Mammary epithelial cell (primary cell): ENCODE measurements at regions of chr6 and their contacts with region 1.

Region 1: GRCh38 chr6:157954150-157955117 is 27.2 kb upstream of the SYNJ2 start:
- DNase-seq: peak; percentile 56
- H3K4me3 ChIP-seq: peak overlapping the region; percentile 3 to 34 (median 13)
- H3K27ac ChIP-seq: no peak overlapping the region
- H3K4me1 ChIP-seq: peaks cover 13% of the 10 kb centered on the region
- H3K27me3 ChIP-seq: no peaks in the 10 kb centered on the region
- CTCF ChIP-seq: no peak

Region 2: DNA sequence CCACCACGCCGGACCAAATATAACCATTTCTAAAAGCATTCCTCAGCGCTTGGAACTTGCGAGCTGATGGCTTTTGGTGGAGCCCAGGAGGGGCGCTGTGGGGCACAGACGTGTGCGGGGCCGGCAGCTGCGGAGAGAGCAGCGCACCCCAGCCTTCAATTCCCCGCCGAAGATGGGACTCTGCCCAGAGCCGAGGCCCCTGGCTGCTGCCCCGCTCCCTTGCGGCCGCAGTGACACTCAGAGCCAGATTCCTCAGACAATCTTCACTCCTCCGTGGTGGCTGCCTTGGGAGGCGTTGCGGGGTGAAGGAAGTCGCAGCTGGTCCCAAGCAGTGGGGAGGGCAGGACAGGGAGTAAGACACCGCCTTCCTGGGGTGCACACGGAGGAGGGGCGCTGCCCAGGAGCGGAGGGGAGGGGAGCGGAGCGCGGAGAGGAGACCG is 718.8 kb before region 1 on chr6:
- CTCF ChIA-PET with region 1: no interaction called
- dilution Hi-C with region 1: no loop called
- in situ Hi-C with region 1: no loop called
- intact Hi-C with region 1: no loop called
- DNase-seq: peak; percentile 16
- H3K4me3 ChIP-seq: peak overlapping the region; percentile 8 to 46 (median 26)
- H3K27ac ChIP-seq: no peak overlapping the region
- H3K4me1 ChIP-seq: peaks cover 7% of the 10 kb centered on the region
- H3K27me3 ChIP-seq: peaks cover 15% of the 10 kb centered on the region
- CTCF ChIP-seq: peak; percentile 49 to 69

Region 3: DNA sequence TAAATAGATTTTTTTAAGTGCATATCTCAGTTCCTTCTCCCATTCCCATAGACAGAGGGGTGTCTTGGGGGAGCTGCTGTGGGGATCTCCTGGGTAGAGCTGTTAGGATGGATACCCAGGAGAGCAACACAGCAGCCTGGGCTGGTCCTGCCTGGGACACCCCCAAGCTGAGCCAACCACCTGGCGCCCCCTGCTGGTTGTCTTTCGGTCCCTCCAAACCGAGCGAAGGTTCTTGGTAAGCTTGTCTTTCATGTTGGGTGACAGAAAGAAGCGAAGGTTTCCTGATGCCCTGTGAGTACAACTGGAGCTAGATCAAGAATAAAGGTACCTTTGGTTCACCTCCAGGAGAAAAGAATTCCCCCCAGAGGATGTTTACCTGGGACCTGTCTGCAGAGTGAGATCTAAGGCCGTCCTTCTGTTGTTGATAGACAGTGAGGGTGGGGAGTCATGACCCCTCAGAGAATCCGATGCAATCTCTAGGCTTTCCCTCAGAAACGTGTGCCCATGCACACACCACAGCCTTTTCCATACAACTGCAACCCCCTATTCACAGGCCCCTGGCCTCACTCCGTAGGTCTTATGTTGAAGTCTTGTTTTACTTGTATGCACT is 80.6 kb before region 1 on chr6:
- CTCF ChIA-PET with region 1: no interaction called
- dilution Hi-C with region 1: loop called (anchors 5 kb)
- in situ Hi-C with region 1: no loop called
- intact Hi-C with region 1: no loop called
- DNase-seq: peak; percentile 56
- H3K4me3 ChIP-seq: no peak overlapping the region
- H3K27ac ChIP-seq: no peak overlapping the region
- H3K4me1 ChIP-seq: no peaks in the 10 kb centered on the region
- H3K27me3 ChIP-seq: no peaks in the 10 kb centered on the region
- CTCF ChIP-seq: peak; percentile 82 to 96

Region 4: GRCh38 chr6:157921685-157922367 is 32.6 kb before region 1 on chr6:
- CTCF ChIA-PET with region 1: no interaction called
- dilution Hi-C with region 1: no loop called
- in situ Hi-C with region 1: no loop called
- intact Hi-C with region 1: no loop called
- DNase-seq: no peak
- H3K4me3 ChIP-seq: no peak overlapping the region
- H3K27ac ChIP-seq: no peak overlapping the region
- H3K4me1 ChIP-seq: no peaks in the 10 kb centered on the region
- H3K27me3 ChIP-seq: no peaks in the 10 kb centered on the region
- CTCF ChIP-seq: no peak

Region 5: GRCh38 chr6:158018851-158019361 is 64.5 kb after region 1 on chr6:
- CTCF ChIA-PET with region 1: no interaction called
- dilution Hi-C with region 1: loop called (anchors 5 kb)
- in situ Hi-C with region 1: no loop called
- intact Hi-C with region 1: no loop called
- DNase-seq: no peak
- H3K4me3 ChIP-seq: no peak overlapping the region
- H3K27ac ChIP-seq: no peak overlapping the region
- H3K4me1 ChIP-seq: no peaks in the 10 kb centered on the region
- H3K27me3 ChIP-seq: no peaks in the 10 kb centered on the region
- CTCF ChIP-seq: no peak

Region 6: DNA sequence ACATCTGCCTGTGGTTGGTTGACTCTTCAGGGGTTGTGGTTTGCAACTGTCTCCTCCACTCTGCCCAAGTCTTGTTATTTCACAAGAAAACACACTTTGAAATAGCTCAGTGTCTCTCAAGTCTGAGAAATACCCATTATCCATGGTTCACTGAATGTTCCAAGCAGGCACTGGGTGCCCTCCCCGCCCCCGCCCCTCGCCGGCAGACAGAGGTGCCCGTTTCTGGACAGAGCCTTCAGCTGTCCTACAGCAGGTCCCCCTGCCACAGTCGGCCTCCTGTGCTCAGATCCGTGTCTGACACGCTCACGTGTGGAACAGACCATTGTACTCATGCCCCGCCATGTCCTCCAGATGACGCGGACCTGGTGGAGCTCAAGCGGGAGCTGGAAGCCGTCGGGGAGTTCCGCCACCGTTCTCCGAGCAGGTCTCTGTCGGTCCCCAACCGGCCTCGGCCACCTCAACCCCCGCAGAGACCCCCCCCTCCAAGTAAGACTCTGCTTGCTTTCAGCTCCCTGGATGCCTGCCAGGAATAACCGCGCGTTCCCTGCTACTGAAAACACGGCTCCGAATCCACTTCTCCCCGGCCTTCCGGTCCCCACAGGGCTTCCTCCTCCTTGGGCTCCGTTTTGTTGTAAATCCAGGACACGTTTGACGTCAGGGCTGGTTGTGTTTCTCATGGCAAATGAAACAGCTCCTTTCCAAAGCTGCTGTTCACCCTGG is 132.2 kb after region 1 on chr6:
- CTCF ChIA-PET with region 1: no interaction called
- dilution Hi-C with region 1: loop called (anchors 5 kb)
- in situ Hi-C with region 1: no loop called
- intact Hi-C with region 1: no loop called
- DNase-seq: no peak
- H3K4me3 ChIP-seq: no peak overlapping the region
- H3K27ac ChIP-seq: no peak overlapping the region
- H3K4me1 ChIP-seq: no peaks in the 10 kb centered on the region
- H3K27me3 ChIP-seq: no peaks in the 10 kb centered on the region
- CTCF ChIP-seq: no peak